BJ (cell line): ENCODE measurements at regions of chr1 and their contacts with region 1.

Region 1: GRCh38 chr1:156480411-156481192 is 20.0 kb downstream of the MEF2D start:
- DNase-seq: no peak
- H3K4me3 ChIP-seq: no peak overlapping the region
- H3K27me3 ChIP-seq: no peaks in the 10 kb centered on the region
- CTCF ChIP-seq: peak; percentile 81

Region 2: GRCh38 chr1:156508163-156508887 is 27.7 kb after region 1 on chr1:
- CTCF ChIA-PET with region 1: interaction called, 12 read pairs
- POLR2A ChIA-PET with region 1: no interaction called
- DNase-seq: no peak
- H3K4me3 ChIP-seq: no peak overlapping the region
- H3K27me3 ChIP-seq: no peaks in the 10 kb centered on the region
- CTCF ChIP-seq: no peak